ENCODE measurements at regions of chr3 and their contacts with region 1.

Region 1: GRCh38 chr3:161314836-161315401 is 56.4 kb downstream of the SPTSSB start:
- DNase-seq: peak; percentile 35
- H3K4me3 Mint-ChIP-seq: no peak overlapping the region
- H3K27ac Mint-ChIP-seq: peak overlapping the region; percentile 84
- H3K4me1 Mint-ChIP-seq: peaks cover 34% of the 10 kb centered on the region
- H3K27me3 Mint-ChIP-seq: no peaks in the 10 kb centered on the region
- CTCF ChIP-seq: no peak

Region 2: GRCh38 chr3:161274719-161275298 is 40.1 kb before region 1 on chr3:
- CTCF ChIA-PET with region 1: no interaction called
- intact Hi-C with region 1: loop called (anchors 5 kb)
- DNase-seq: peak; percentile 63
- H3K4me3 Mint-ChIP-seq: no peak overlapping the region
- H3K27ac Mint-ChIP-seq: no peak overlapping the region
- H3K4me1 Mint-ChIP-seq: no peaks in the 10 kb centered on the region
- H3K27me3 Mint-ChIP-seq: no peaks in the 10 kb centered on the region
- CTCF ChIP-seq: peak; percentile 39

Region 3: GRCh38 chr3:161343986-161344385 is 29.1 kb after region 1 on chr3:
- CTCF ChIA-PET with region 1: no interaction called
- intact Hi-C with region 1: no loop called
- DNase-seq: no peak
- H3K4me3 Mint-ChIP-seq: no peak overlapping the region
- H3K27ac Mint-ChIP-seq: no peak overlapping the region
- H3K4me1 Mint-ChIP-seq: peaks cover 7% of the 10 kb centered on the region
- H3K27me3 Mint-ChIP-seq: no peaks in the 10 kb centered on the region
- CTCF ChIP-seq: no peak

Region 4: GRCh38 chr3:161371430-161372326 is 56.8 kb after region 1 on chr3 and contains the start of gene SPTSSB:
- CTCF ChIA-PET with region 1: interaction called, 7 read pairs
- intact Hi-C with region 1: loop called (anchors 2 kb)
- DNase-seq: peak; percentile 90
- H3K4me3 Mint-ChIP-seq: peak within 1 kb of the TSS; percentile 88
- H3K27ac Mint-ChIP-seq: peak within 1 kb of the TSS; percentile 30
- H3K4me1 Mint-ChIP-seq: peaks cover 12% of the 10 kb centered on the region
- H3K27me3 Mint-ChIP-seq: no peaks in the 10 kb centered on the region
- CTCF ChIP-seq: peak; percentile 19
- total RNA-seq, gene SPTSSB: 3.0 and 8.1 TPM in 2 replicates